Caco-2 (cell line): ENCODE measurements at regions of chr11 and their contacts with region 1.

Region 1: GRCh38 chr11:76207642-76208401 is 1.5 kb upstream of the WNT11 start:
- DNase-seq: peak; percentile 91 to 96
- H3K4me3 ChIP-seq: peak overlapping the region; percentile 70
- H3K4me3 Mint-ChIP-seq: peak overlapping the region; percentile 85
- H3K27ac Mint-ChIP-seq: peak overlapping the region; percentile 5
- H3K4me1 ChIP-seq: peaks cover 14% of the 10 kb centered on the region
- H3K4me1 Mint-ChIP-seq: peaks cover 22% of the 10 kb centered on the region
- H3K27me3 ChIP-seq: peaks cover 3% of the 10 kb centered on the region; the same call in 1 of the 2 replicates
- H3K27me3 Mint-ChIP-seq: peaks cover 10% of the 10 kb centered on the region
- CTCF ChIP-seq: peak; percentile 97 to 99

Region 2: DNA sequence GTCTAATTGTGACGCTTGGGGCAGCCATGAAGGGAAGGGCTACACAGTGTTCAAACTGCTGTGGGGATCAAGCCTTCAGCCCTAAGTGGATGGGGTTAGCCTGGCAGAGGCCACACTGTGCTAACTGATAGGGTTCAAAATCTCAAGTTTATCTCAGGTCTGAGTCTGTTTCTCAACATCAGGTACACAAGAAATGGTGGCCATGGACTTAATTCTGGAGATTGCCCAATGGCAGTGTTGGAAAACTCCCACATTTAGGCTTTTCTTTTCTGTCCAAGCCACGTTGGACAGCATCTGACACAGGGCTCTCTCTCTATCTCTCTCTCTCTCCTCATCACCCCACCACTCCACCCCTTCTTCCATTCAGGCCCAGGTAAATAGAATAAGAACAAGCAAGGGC is 450.2 kb before region 1 on chr11:
- CTCF ChIA-PET with region 1: no interaction called
- POLR2A ChIA-PET with region 1: no interaction called
- intact Hi-C with region 1: no loop called
- DNase-seq: peak in 1 of 2 experiments; percentile 20
- H3K4me3 ChIP-seq: no peak overlapping the region
- H3K4me3 Mint-ChIP-seq: no peak overlapping the region
- H3K27ac Mint-ChIP-seq: no peak overlapping the region
- H3K4me1 ChIP-seq: peaks cover 32% of the 10 kb centered on the region
- H3K4me1 Mint-ChIP-seq: peaks cover 26% of the 10 kb centered on the region
- H3K27me3 ChIP-seq: no peaks in the 10 kb centered on the region
- H3K27me3 Mint-ChIP-seq: no peaks in the 10 kb centered on the region
- CTCF ChIP-seq: no peak

Region 3: DNA sequence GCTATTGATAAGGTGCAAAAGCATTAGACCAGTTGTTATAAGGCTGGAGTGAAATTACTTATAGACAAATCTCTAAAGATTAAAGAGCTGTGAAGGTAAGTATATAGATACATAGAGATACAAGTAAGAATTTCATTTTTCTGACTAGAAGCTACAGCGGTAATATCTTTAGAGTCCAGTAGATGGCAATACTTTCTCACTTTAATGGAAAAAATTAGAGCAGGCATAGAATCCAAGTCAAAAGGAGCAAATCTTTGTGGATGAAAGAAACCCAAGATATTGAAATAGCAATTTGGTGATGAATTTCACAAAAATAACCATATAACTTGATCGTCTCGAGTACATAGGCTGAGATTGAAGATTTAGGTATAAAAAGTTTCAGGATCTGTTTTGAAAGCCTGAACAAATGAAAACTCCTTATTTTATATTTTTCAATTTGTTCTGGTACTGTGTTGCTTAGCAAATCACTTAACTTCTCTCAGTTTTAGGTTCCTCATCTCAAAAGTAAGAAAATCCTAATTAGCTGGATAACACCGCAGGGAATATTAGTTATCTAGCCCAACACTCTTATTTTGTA is 310.9 kb before region 1 on chr11:
- CTCF ChIA-PET with region 1: interaction called, 31 read pairs
- POLR2A ChIA-PET with region 1: interaction called, 9 read pairs
- intact Hi-C with region 1: loop called (anchors 1 kb)
- DNase-seq: peak in 1 of 2 experiments; percentile 56
- H3K4me3 ChIP-seq: no peak overlapping the region
- H3K4me3 Mint-ChIP-seq: no peak overlapping the region
- H3K27ac Mint-ChIP-seq: no peak overlapping the region
- H3K4me1 ChIP-seq: no peaks in the 10 kb centered on the region
- H3K4me1 Mint-ChIP-seq: no peaks in the 10 kb centered on the region
- H3K27me3 ChIP-seq: no peaks in the 10 kb centered on the region
- H3K27me3 Mint-ChIP-seq: no peaks in the 10 kb centered on the region
- CTCF ChIP-seq: peak; percentile 68 to 81

Region 4: GRCh38 chr11:76235233-76236091 is 27.6 kb after region 1 on chr11:
- CTCF ChIA-PET with region 1: interaction called, 34 read pairs
- POLR2A ChIA-PET with region 1: interaction called, 3 read pairs
- intact Hi-C with region 1: loop called (anchors 1 kb)
- DNase-seq: peak; percentile 80 to 86
- H3K4me3 ChIP-seq: peak overlapping the region; percentile 43
- H3K4me3 Mint-ChIP-seq: peak overlapping the region; percentile 93
- H3K27ac Mint-ChIP-seq: peak overlapping the region; percentile 89
- H3K4me1 ChIP-seq: peaks cover 10% of the 10 kb centered on the region
- H3K4me1 Mint-ChIP-seq: peaks cover 15% of the 10 kb centered on the region
- H3K27me3 ChIP-seq: no peaks in the 10 kb centered on the region
- H3K27me3 Mint-ChIP-seq: peaks cover 3% of the 10 kb centered on the region
- CTCF ChIP-seq: no peak

Region 5: DNA sequence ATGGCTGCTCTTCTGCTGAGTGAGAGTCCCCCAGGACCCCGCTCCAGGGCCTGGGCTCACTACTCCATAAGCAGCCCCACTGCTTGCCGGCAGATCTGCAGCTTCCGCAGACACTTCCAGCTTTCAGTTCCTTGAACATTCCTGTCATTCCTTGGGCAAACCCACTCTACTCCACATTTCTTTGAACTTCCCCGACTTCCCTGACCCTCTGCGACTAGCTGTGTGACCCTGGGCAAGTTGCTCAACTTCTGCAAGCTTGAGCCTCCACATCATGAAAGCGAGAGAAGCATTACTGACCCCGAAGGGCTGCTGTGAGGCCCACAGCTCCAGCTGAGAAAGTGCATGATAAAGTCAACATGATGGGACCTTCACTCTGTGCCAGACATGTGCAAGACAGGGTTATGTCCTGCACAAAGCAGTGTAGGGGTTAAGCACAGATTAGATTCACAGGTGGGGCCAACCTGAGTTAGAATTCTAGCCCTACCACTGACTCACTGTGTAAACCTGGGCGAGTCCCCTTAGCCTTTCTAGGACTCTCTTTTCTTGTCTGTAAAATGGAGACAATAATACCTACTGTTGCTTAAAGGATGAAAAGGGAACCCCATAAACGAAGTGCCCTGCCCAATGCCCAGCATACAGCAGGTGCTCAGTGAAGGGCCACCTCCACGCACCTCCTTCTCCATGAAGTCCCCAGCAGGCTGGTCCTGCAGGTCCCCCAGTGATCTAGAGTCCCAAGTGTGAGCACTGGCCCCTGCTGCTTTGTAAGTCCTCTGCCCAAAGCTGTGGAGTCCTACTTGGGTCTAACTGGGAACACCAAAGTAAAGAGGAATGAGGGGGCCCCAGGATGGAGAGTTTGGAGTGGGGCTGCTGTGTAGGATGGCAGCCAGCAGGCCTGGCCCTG is 121.5 kb after region 1 on chr11:
- CTCF ChIA-PET with region 1: interaction called, 170 read pairs
- POLR2A ChIA-PET with region 1: interaction called, 4 read pairs
- intact Hi-C with region 1: no loop called
- DNase-seq: peak; percentile 97 to 99
- H3K4me3 ChIP-seq: no peak overlapping the region
- H3K4me3 Mint-ChIP-seq: peak overlapping the region; percentile 51
- H3K27ac Mint-ChIP-seq: peak overlapping the region; percentile 84
- H3K4me1 ChIP-seq: peaks cover 39% of the 10 kb centered on the region
- H3K4me1 Mint-ChIP-seq: peaks cover 38% of the 10 kb centered on the region
- H3K27me3 ChIP-seq: no peaks in the 10 kb centered on the region
- H3K27me3 Mint-ChIP-seq: no peaks in the 10 kb centered on the region
- CTCF ChIP-seq: no peak

Region 6: DNA sequence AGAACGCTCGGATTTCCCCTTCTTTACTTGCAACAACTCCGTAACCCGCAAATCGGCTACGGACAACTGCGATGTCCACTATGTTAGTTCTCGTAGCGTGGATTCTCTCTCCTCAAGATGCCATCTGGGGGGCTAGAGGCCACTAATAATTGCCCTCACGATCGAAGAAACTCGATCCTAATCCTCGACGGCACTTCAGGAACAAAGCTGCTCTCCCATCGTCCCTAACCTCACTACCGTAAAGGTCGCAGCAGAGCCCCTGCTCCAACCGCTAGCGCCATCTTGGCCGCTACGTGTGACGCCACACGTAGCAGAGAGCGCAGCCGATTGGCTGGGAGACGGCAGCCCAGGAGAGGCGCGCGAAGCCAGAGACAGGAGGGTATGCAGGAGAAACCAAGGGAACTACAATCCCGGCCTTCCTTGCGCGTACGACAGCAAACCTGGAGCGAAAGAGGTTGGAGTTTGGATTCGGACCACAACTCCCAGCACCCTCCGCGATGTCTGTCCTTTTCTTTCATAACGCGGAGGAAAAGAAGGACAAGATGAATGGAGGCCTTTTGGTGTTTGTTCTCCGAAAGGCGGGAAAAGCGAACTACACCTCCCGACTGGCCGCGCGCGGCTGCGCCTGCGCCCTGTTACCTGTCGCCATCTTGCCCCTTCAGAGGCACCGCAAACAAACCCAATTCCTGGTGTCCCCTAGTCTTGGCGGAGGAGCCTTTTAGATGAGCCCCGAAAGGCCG is 236.7 kb after region 1 on chr11 and contains the start of gene EMSY:
- CTCF ChIA-PET with region 1: interaction called, 21 read pairs
- POLR2A ChIA-PET with region 1: no interaction called
- intact Hi-C with region 1: loop called (anchors 2 kb)
- DNase-seq: peak; percentile 99 to 100
- H3K4me3 ChIP-seq: peak within 1 kb of the TSS; percentile 92
- H3K4me3 Mint-ChIP-seq: peak within 1 kb of the TSS; percentile 98
- H3K27ac Mint-ChIP-seq: peak within 1 kb of the TSS; percentile 99
- H3K4me1 ChIP-seq: peaks cover 15% of the 10 kb centered on the region
- H3K4me1 Mint-ChIP-seq: peaks cover 27% of the 10 kb centered on the region
- H3K27me3 ChIP-seq: no peaks in the 10 kb centered on the region
- H3K27me3 Mint-ChIP-seq: no peaks in the 10 kb centered on the region
- CTCF ChIP-seq: no peak
- total RNA-seq, gene EMSY: 43.6 and 53.6 TPM in 2 replicates

Region 7: GRCh38 chr11:76680518-76681425 is 472.9 kb after region 1 on chr11:
- CTCF ChIA-PET with region 1: interaction called, 6 read pairs
- POLR2A ChIA-PET with region 1: no interaction called
- intact Hi-C with region 1: loop called (anchors 2 kb)
- DNase-seq: peak; percentile 85 to 90
- H3K4me3 ChIP-seq: no peak overlapping the region
- H3K4me3 Mint-ChIP-seq: no peak overlapping the region
- H3K27ac Mint-ChIP-seq: no peak overlapping the region
- H3K4me1 ChIP-seq: no peaks in the 10 kb centered on the region
- H3K4me1 Mint-ChIP-seq: no peaks in the 10 kb centered on the region
- H3K27me3 ChIP-seq: no peaks in the 10 kb centered on the region
- H3K27me3 Mint-ChIP-seq: peaks cover 6% of the 10 kb centered on the region
- CTCF ChIP-seq: peak; percentile 96 to 98